ENCODE measurements at regions of chr4 and their contacts with region 1.

Region 1: GRCh38 chr4:56301181-56302076 is 85.9 kb downstream of the AASDH start:
- DNase-seq: peak; percentile 27 to 71 (median 67)
- ATAC-seq: peak; percentile 92
- H3K4me3 ChIP-seq: peak overlapping the region; percentile 13
- H3K4me3 Mint-ChIP-seq: peak overlapping the region; percentile 46 to 79 (median 64)
- H3K27ac ChIP-seq: no peak overlapping the region
- H3K27ac Mint-ChIP-seq: peak overlapping the region in 3 of 9 donors; percentile 4 to 41 (median 32)
- H3K4me1 ChIP-seq: no peaks in the 10 kb centered on the region
- H3K4me1 Mint-ChIP-seq: peaks cover 4 to 21% (median 16%) of the 10 kb centered on the region in 7 donors
- H3K27me3 ChIP-seq: no peaks in the 10 kb centered on the region
- H3K27me3 Mint-ChIP-seq: peaks cover 0 to 7% (median 0%) of the 10 kb centered on the region in 5 donors

Region 2: DNA sequence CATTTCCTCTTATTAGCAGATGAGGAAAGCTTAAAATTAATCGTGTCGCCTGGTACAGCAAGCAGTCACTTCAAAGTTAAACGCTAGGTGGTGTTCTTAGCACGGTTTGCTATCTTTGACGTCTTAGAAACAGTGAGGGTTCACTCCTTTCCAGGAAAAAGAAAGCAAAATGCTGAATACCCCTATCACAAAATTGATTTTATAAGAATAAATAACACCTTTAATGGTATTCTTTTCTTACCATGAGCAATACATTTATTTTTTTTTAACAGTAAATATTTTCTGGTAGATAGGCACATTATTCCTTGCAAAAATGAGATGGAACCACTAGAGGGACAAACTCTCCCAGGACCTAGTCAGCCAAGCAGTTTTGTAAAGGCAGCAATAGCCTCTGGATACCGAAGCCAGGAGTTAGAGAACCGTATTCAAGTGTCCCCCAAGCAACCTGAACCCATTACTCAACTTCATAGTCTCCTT is 1329.9 kb before region 1 on chr4:
- CTCF ChIA-PET with region 1: no interaction called
- POLR2A ChIA-PET with region 1: no interaction called
- intact Hi-C with region 1: loop called in 1 of 2 experiments (anchors 2 kb)
- DNase-seq: peak in 4 of 9 donors; percentile 24 to 34 (median 32)
- ATAC-seq: peak; percentile 67
- H3K4me3 ChIP-seq: no peak overlapping the region
- H3K4me3 Mint-ChIP-seq: no peak overlapping the region
- H3K27ac ChIP-seq: no peak overlapping the region
- H3K27ac Mint-ChIP-seq: no peak overlapping the region
- H3K4me1 ChIP-seq: no peaks in the 10 kb centered on the region
- H3K4me1 Mint-ChIP-seq: no peaks in the 10 kb centered on the region
- H3K27me3 ChIP-seq: no peaks in the 10 kb centered on the region
- H3K27me3 Mint-ChIP-seq: peaks cover 0 to 13% (median 9%) of the 10 kb centered on the region in 5 donors

Region 3: DNA sequence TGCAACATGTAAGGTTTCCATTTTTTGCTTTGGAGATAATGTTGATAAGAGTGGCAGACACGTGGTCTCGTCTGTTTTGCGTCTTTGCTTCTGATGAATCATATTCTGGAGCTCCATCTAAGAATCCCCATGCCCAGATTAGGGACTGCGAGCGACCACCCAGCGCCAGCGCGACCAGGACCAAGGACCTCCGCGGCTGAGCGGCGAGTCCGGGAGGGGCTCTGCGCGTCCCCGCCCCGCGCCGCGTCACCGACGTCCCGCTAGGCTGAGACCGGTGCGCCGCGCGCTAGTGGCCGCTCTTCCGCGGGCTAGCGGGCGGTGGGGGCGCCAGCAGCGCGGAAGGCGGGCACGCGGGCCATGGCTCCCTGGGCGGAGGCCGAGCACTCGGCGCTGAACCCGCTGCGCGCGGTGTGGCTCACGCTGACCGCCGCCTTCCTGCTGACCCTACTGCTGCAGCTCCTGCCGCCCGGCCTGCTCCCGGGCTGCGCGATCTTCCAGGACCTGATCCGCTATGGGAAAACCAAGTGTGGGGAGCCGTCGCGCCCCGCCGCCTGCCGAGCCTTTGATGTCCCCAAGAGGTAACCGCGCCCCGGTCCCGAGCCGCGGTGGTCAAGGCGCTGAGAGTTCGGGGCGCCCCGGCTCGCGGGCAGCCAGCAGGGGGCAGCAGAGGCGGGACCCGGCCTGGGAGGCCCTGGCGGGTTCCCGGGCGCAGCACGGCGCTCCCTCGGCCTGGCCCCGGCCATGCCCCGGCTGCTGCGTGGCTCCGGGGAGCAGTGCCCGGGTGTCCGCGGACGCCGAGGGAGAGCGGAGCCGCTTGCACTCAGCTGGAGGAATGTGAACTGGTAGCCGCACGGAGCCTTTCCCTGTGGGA is 955.2 kb before region 1 on chr4 and contains the start of gene SRD5A3:
- CTCF ChIA-PET with region 1: no interaction called
- POLR2A ChIA-PET with region 1: no interaction called
- intact Hi-C with region 1: loop called (anchors 2 kb)
- DNase-seq: peak; percentile 53 to 92 (median 72)
- ATAC-seq: peak; percentile 97
- H3K4me3 ChIP-seq: peak within 1 kb of the TSS; percentile 79
- H3K4me3 Mint-ChIP-seq: peak within 1 kb of the TSS; percentile 83 to 94 (median 90)
- H3K27ac ChIP-seq: peak within 1 kb of the TSS; percentile 69
- H3K27ac Mint-ChIP-seq: peak within 1 kb of the TSS; percentile 70 to 91 (median 87)
- H3K4me1 ChIP-seq: peaks cover 6 to 8% of the 10 kb centered on the region in 2 donors
- H3K4me1 Mint-ChIP-seq: peaks cover 8 to 23% (median 19%) of the 10 kb centered on the region in 7 donors
- H3K27me3 ChIP-seq: no peaks in the 10 kb centered on the region
- H3K27me3 Mint-ChIP-seq: no peaks in the 10 kb centered on the region
- total RNA-seq, gene SRD5A3: 1.9 to 8.5 (median 4.5) TPM

Region 4: GRCh38 chr4:55866973-55867574 is 434.4 kb before region 1 on chr4:
- CTCF ChIA-PET with region 1: no interaction called
- POLR2A ChIA-PET with region 1: no interaction called
- intact Hi-C with region 1: loop called (anchors 2 to 5 kb)
- DNase-seq: peak in 7 of 9 donors; percentile 21 to 56 (median 50)
- ATAC-seq: peak; percentile 88
- H3K4me3 ChIP-seq: no peak overlapping the region
- H3K4me3 Mint-ChIP-seq: no peak overlapping the region
- H3K27ac ChIP-seq: no peak overlapping the region
- H3K27ac Mint-ChIP-seq: no peak overlapping the region
- H3K4me1 ChIP-seq: no peaks in the 10 kb centered on the region
- H3K4me1 Mint-ChIP-seq: peaks cover 6 to 20% (median 15%) of the 10 kb centered on the region in 7 donors
- H3K27me3 ChIP-seq: no peaks in the 10 kb centered on the region
- H3K27me3 Mint-ChIP-seq: no peaks in the 10 kb centered on the region

Region 5: GRCh38 chr4:56026596-56026995 is 274.8 kb before region 1 on chr4:
- CTCF ChIA-PET with region 1: no interaction called
- POLR2A ChIA-PET with region 1: no interaction called
- intact Hi-C with region 1: loop called in 1 of 2 experiments (anchors 5 kb)
- DNase-seq: no peak
- ATAC-seq: no peak
- H3K4me3 ChIP-seq: no peak overlapping the region
- H3K4me3 Mint-ChIP-seq: no peak overlapping the region
- H3K27ac ChIP-seq: no peak overlapping the region
- H3K27ac Mint-ChIP-seq: no peak overlapping the region
- H3K4me1 ChIP-seq: no peaks in the 10 kb centered on the region
- H3K4me1 Mint-ChIP-seq: peaks cover 0 to 9% (median 0%) of the 10 kb centered on the region in 7 donors
- H3K27me3 ChIP-seq: no peaks in the 10 kb centered on the region
- H3K27me3 Mint-ChIP-seq: no peaks in the 10 kb centered on the region

Region 6: GRCh38 chr4:56211202-56211601 is 90.2 kb before region 1 on chr4:
- CTCF ChIA-PET with region 1: no interaction called
- POLR2A ChIA-PET with region 1: no interaction called
- intact Hi-C with region 1: loop called in 1 of 2 experiments (anchors 5 kb)
- DNase-seq: no peak
- ATAC-seq: no peak
- H3K4me3 ChIP-seq: no peak overlapping the region
- H3K4me3 Mint-ChIP-seq: no peak overlapping the region
- H3K27ac ChIP-seq: no peak overlapping the region
- H3K27ac Mint-ChIP-seq: peak overlapping the region in 1 of 9 donors; percentile 14
- H3K4me1 ChIP-seq: no peaks in the 10 kb centered on the region
- H3K4me1 Mint-ChIP-seq: no peaks in the 10 kb centered on the region
- H3K27me3 ChIP-seq: no peaks in the 10 kb centered on the region
- H3K27me3 Mint-ChIP-seq: peaks cover 0 to 4% (median 0%) of the 10 kb centered on the region in 5 donors

Region 7: GRCh38 chr4:56229947-56230346 is 71.5 kb before region 1 on chr4:
- CTCF ChIA-PET with region 1: no interaction called
- POLR2A ChIA-PET with region 1: no interaction called
- intact Hi-C with region 1: no loop called
- DNase-seq: no peak
- ATAC-seq: no peak
- H3K4me3 ChIP-seq: no peak overlapping the region
- H3K4me3 Mint-ChIP-seq: no peak overlapping the region
- H3K27ac ChIP-seq: no peak overlapping the region
- H3K27ac Mint-ChIP-seq: no peak overlapping the region
- H3K4me1 ChIP-seq: no peaks in the 10 kb centered on the region
- H3K4me1 Mint-ChIP-seq: peaks cover 0 to 13% (median 9%) of the 10 kb centered on the region in 7 donors
- H3K27me3 ChIP-seq: no peaks in the 10 kb centered on the region
- H3K27me3 Mint-ChIP-seq: peaks cover 8 to 27% (median 21%) of the 10 kb centered on the region in 5 donors